ENCODE measurements at regions of chr12 and their contacts with region 1.

Region 1: DNA sequence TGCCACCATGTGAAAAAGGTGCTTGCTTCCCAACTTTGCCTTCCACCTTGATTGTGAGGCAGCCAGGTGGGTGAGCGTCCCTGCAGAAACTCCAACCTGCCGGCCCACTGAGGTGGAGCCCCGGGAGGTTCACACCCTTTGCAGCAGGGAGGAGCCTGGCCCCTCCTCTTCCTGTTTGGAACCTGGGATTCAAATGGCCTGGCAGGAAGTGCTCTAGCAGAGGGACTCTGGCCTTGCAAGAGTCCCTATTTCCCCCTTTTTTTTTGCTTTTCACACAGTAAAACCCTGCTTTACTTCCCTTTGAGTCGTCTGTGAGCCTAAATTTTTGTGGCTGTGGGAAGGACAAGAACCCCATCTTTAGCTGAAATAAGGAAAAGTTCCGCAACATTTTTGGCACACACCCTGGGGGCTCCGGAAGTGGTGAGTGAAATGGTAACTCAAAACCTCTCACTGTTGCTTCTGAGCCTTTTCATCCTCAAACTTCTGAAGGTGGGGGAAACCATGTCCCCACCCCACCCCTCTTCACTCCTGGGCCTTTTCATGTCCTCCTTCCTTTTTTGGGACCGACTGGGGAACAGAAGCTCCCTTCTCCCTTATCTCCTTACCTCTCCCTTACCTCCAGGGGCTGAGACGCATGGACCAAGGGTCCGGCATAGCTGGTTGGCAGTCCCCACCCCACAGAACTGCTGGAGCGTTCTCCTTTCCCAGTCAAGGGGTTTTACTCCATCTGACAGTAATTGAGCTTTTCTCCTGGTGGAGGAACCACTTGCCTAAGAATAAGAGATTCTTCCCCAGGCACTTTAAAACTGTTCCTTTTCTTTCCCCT is 102.0 kb downstream of the KCNMB4 start:
- DNase-seq: no peak
- ATAC-seq: peak; percentile 88
- H3K4me3 ChIP-seq: peak overlapping the region; percentile 68
- H3K27ac ChIP-seq: peak overlapping the region; percentile 33
- H3K4me1 ChIP-seq: no peaks in the 10 kb centered on the region
- H3K27me3 ChIP-seq: no peaks in the 10 kb centered on the region
- CTCF ChIP-seq: no peak
- EP300 ChIP-seq: no peak
- POLR2A ChIP-seq: no peak
- RAD21 ChIP-seq: no peak

Region 2: DNA sequence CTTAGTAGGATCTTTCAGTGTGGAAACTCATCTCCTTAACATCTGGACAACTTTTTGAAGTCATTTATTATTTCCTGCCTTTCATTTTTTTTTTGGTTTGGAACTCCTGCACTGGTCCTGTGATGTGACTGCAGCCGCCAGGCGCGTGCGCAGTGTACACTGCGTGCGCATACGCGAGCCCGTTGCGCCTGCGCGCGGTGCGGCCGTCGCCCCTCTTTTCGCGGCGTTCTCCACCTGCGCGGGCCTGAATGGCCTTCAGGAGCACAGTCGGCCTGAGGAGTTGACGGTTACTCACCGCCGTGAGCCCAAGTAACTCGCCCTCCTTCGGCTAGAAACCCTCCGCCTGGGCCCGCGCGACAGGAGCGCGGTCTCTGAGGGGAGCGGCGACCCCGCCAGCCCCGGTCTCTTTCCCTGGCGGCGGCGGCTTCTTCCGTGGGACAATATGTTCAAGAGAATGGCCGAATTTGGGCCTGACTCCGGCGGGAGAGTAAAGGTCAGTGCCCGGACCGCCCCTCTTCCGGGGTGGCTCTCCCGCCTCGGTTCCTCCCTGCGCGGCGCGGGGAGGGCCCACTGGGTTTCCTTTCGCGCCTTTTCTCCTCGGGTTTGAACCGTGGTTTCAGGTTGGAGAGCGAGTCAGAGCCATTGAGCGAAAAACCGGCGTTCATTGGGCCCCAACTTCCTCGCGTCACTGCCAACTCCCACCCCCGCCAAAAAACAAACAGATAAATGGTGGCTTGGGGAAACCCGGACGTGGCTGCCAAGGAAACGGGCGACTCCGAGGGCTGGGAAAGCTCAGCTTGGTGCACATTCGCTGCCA is 1108.4 kb before region 1 on chr12 and contains the start of gene YEATS4:
- CTCF ChIA-PET with region 1: no interaction called
- POLR2A ChIA-PET with region 1: no interaction called
- RAD21 ChIA-PET with region 1: no interaction called
- SMC1A ChIA-PET with region 1: no interaction called
- in situ Hi-C with region 1: no loop called
- intact Hi-C with region 1: no loop called
- DNase-seq: peak; percentile 84
- ATAC-seq: peak; percentile 91
- H3K4me3 ChIP-seq: peak within 1 kb of the TSS; percentile 62
- H3K27ac ChIP-seq: peak within 1 kb of the TSS; percentile 98
- H3K4me1 ChIP-seq: no peaks in the 10 kb centered on the region; the same call in 1 of the 2 replicates
- H3K27me3 ChIP-seq: no peaks in the 10 kb centered on the region
- CTCF ChIP-seq: no peak
- EP300 ChIP-seq: no peak
- POLR2A ChIP-seq: peak; percentile 88
- RAD21 ChIP-seq: no peak
- polyA plus RNA-seq, gene YEATS4: 23.8 to 36.2 TPM

Region 3: GRCh38 chr12:69792533-69792932 is 675.6 kb before region 1 on chr12:
- CTCF ChIA-PET with region 1: no interaction called
- POLR2A ChIA-PET with region 1: no interaction called
- RAD21 ChIA-PET with region 1: no interaction called
- SMC1A ChIA-PET with region 1: no interaction called
- in situ Hi-C with region 1: no loop called
- intact Hi-C with region 1: no loop called
- DNase-seq: no peak
- ATAC-seq: no peak
- H3K4me3 ChIP-seq: no peak overlapping the region
- H3K27ac ChIP-seq: no peak overlapping the region
- H3K4me1 ChIP-seq: no peaks in the 10 kb centered on the region
- H3K27me3 ChIP-seq: no peaks in the 10 kb centered on the region
- CTCF ChIP-seq: no peak
- EP300 ChIP-seq: no peak
- POLR2A ChIP-seq: no peak
- RAD21 ChIP-seq: no peak

Region 4: GRCh38 chr12:70487440-70487839 is 19.3 kb after region 1 on chr12:
- CTCF ChIA-PET with region 1: interaction called, 3 read pairs
- POLR2A ChIA-PET with region 1: interaction called, 12 read pairs
- RAD21 ChIA-PET with region 1: interaction called, 20 read pairs
- SMC1A ChIA-PET with region 1: interaction called, 37 read pairs
- in situ Hi-C with region 1: no loop called
- intact Hi-C with region 1: no loop called
- DNase-seq: peak; percentile 31
- ATAC-seq: peak; percentile 88
- H3K4me3 ChIP-seq: 0 out of 2 replicates have a peak overlapping the region, but pooled peaks have one; percentile 4
- H3K27ac ChIP-seq: no peak overlapping the region
- H3K4me1 ChIP-seq: peaks cover 4% of the 10 kb centered on the region; the same call in 1 of the 2 replicates
- H3K27me3 ChIP-seq: no peaks in the 10 kb centered on the region
- CTCF ChIP-seq: no peak
- EP300 ChIP-seq: no peak
- POLR2A ChIP-seq: no peak
- RAD21 ChIP-seq: no peak